Activated CD4-positive, alpha-beta memory T cell treated with anti-CD3 and anti-CD28 coated beads for 36 hours (primary cell): ENCODE measurements at regions of chr1 and their contacts with region 1.

Region 1: GRCh38 chr1:153633716-153634665 is at the start of gene CHTOP:
- DNase-seq: peak; percentile 98
- H3K4me3 Mint-ChIP-seq: peak within 1 kb of the TSS; percentile 92
- H3K27ac Mint-ChIP-seq: peak within 1 kb of the TSS; percentile 100
- H3K4me1 Mint-ChIP-seq: peaks cover 45% of the 10 kb centered on the region
- H3K27me3 Mint-ChIP-seq: no peaks in the 10 kb centered on the region
- total RNA-seq, gene CHTOP: 92.5 to 94.7 TPM

Region 2: DNA sequence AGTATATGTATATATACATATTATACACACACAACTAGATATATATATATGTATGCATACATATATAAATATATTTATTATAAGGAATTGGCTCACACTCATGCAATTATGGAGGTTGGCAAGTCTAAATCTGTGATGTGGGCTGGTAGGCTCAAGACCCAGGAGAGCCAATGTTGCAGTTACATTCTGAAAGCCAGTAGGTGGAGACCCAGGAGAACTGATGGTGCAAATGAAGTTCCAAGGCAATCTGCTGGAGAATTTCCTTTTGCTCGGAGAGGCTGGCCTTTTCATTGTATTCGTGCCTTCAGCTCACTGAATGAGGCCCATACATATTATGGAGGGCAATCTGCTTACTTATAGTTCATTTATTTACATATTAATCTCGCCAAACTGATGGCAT is 716.2 kb before region 1 on chr1:
- CTCF ChIA-PET with region 1: no interaction called
- POLR2A ChIA-PET with region 1: no interaction called
- intact Hi-C with region 1: no loop called
- DNase-seq: no peak
- H3K4me3 Mint-ChIP-seq: no peak overlapping the region
- H3K27ac Mint-ChIP-seq: no peak overlapping the region
- H3K4me1 Mint-ChIP-seq: no peaks in the 10 kb centered on the region
- H3K27me3 Mint-ChIP-seq: peaks cover 21% of the 10 kb centered on the region

Region 3: GRCh38 chr1:153532769-153533599 is 101.0 kb before region 1 on chr1:
- CTCF ChIA-PET with region 1: interaction called, 23 read pairs
- POLR2A ChIA-PET with region 1: interaction called, 24 read pairs
- intact Hi-C with region 1: loop called (anchors 10 kb)
- DNase-seq: peak; percentile 90
- H3K4me3 Mint-ChIP-seq: peak overlapping the region; percentile 91
- H3K27ac Mint-ChIP-seq: peak overlapping the region; percentile 96
- H3K4me1 Mint-ChIP-seq: peaks cover 58% of the 10 kb centered on the region
- H3K27me3 Mint-ChIP-seq: no peaks in the 10 kb centered on the region

Region 4: GRCh38 chr1:153545067-153546055 is 88.6 kb before region 1 on chr1 and contains the start of gene S100A4:
- CTCF ChIA-PET with region 1: no interaction called
- POLR2A ChIA-PET with region 1: interaction called, 20 read pairs
- intact Hi-C with region 1: no loop called
- DNase-seq: peak; percentile 98
- H3K4me3 Mint-ChIP-seq: peak within 1 kb of the TSS; percentile 92
- H3K27ac Mint-ChIP-seq: peak within 1 kb of the TSS; percentile 99
- H3K4me1 Mint-ChIP-seq: peaks cover 74% of the 10 kb centered on the region
- H3K27me3 Mint-ChIP-seq: no peaks in the 10 kb centered on the region
- total RNA-seq, gene S100A4: 352 to 382 TPM

Region 5: GRCh38 chr1:153566440-153567379 is 67.3 kb before region 1 on chr1:
- CTCF ChIA-PET with region 1: interaction called, 26 read pairs
- POLR2A ChIA-PET with region 1: interaction called, 19 read pairs
- intact Hi-C with region 1: no loop called
- DNase-seq: peak; percentile 95
- H3K4me3 Mint-ChIP-seq: peak overlapping the region; percentile 64
- H3K27ac Mint-ChIP-seq: peak overlapping the region; percentile 97
- H3K4me1 Mint-ChIP-seq: peaks cover 53% of the 10 kb centered on the region
- H3K27me3 Mint-ChIP-seq: peaks cover 1% of the 10 kb centered on the region

Region 6: GRCh38 chr1:153649863-153650235 is 15.9 kb after region 1 on chr1:
- CTCF ChIA-PET with region 1: interaction called, 4 read pairs
- POLR2A ChIA-PET with region 1: interaction called, 25 read pairs
- intact Hi-C with region 1: no loop called
- DNase-seq: no peak
- H3K4me3 Mint-ChIP-seq: no peak overlapping the region
- H3K27ac Mint-ChIP-seq: peak overlapping the region; percentile 43
- H3K4me1 Mint-ChIP-seq: peaks cover 25% of the 10 kb centered on the region
- H3K27me3 Mint-ChIP-seq: no peaks in the 10 kb centered on the region

Region 7: DNA sequence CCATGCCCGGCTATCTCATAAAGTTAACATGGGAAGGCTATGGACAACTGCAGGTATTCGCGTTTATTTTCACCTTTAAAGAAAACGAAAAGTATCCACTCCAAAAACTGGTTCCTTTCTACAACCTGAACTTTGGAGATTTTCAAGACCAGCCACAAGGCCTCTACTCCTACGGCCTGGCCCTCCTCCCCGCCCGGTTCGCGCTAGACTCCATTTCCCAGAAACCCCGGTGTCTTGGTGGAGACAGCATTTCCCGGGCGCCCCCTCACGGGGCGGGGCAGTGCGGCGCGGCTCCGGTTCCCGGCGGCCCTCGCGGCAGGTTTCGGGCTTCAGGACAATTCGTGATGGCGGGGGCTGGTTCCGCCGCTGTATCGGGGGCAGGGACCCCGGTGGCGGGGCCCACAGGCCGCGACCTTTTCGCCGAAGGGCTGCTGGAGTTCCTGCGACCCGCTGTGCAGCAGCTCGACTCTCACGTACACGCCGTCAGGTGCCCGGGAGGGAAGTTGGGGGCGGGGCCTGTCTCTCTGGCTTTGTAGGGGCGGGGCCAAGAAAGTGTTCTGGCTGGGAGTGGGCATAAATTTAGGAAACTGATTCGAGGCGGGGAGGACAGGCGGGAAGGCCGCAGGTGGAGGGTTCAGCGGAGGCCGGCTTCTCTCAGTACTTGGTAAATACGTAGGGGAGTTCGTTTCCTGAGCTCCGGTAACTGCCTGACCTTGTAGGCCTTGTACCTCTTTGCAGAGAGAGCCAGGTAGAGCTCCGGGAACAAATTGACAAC is 24.6 kb after region 1 on chr1 and contains the start of gene SNAPIN:
- CTCF ChIA-PET with region 1: interaction called, 5 read pairs
- POLR2A ChIA-PET with region 1: interaction called, 11 read pairs
- intact Hi-C with region 1: loop called (anchors 1 kb)
- DNase-seq: peak; percentile 95
- H3K4me3 Mint-ChIP-seq: peak within 1 kb of the TSS; percentile 93
- H3K27ac Mint-ChIP-seq: peak within 1 kb of the TSS; percentile 82
- H3K4me1 Mint-ChIP-seq: peaks cover 17% of the 10 kb centered on the region
- H3K27me3 Mint-ChIP-seq: no peaks in the 10 kb centered on the region
- total RNA-seq, gene SNAPIN: 31.3 to 32.1 TPM

Region 8: GRCh38 chr1:153958111-153958960 is 324.3 kb after region 1 on chr1 and contains the start of gene CRTC2:
- CTCF ChIA-PET with region 1: interaction called, 4 read pairs
- POLR2A ChIA-PET with region 1: no interaction called
- intact Hi-C with region 1: loop called (anchors 5 kb)
- DNase-seq: peak; percentile 99
- H3K4me3 Mint-ChIP-seq: peak within 1 kb of the TSS; percentile 97
- H3K27ac Mint-ChIP-seq: peak within 1 kb of the TSS; percentile 96
- H3K4me1 Mint-ChIP-seq: peaks cover 51% of the 10 kb centered on the region
- H3K27me3 Mint-ChIP-seq: no peaks in the 10 kb centered on the region
- total RNA-seq, gene CRTC2: 60.8 to 78.0 TPM